ENCODE measurements at regions of chr3 and their contacts with region 1.

Region 1: DNA sequence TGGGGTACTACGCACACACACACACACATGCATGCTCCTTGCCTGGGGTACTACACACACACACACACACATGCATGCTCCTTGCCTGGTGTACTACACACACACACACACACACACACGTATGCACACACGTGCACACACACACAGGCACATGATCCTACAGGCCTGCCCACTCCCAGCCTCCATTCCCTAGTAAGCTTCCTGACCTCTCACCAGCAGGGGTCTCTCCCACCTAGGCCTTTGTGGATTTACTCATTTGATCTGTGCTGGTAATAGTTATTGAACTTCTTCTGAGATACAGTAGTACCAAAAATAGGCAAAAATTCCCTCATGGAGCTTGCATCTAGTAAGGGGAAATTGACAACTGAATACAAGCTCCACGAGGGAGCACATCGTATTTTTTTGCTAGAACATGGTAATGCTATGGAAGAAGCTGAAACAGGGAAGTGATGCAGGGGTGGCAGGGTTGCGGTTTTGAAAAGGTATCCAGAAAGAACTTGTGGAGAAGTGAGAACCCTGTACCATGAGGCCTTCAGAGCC is 19.1 kb downstream of the TTC21A start:
- DNase-seq: no peak
- ATAC-seq: peak; percentile 67
- H3K4me3 ChIP-seq: no peak overlapping the region
- H3K27ac ChIP-seq: peak overlapping the region in 1 of 2 donors; percentile 8
- H3K4me1 ChIP-seq: no peaks in the 10 kb centered on the region
- H3K27me3 ChIP-seq: no peaks in the 10 kb centered on the region

Region 2: DNA sequence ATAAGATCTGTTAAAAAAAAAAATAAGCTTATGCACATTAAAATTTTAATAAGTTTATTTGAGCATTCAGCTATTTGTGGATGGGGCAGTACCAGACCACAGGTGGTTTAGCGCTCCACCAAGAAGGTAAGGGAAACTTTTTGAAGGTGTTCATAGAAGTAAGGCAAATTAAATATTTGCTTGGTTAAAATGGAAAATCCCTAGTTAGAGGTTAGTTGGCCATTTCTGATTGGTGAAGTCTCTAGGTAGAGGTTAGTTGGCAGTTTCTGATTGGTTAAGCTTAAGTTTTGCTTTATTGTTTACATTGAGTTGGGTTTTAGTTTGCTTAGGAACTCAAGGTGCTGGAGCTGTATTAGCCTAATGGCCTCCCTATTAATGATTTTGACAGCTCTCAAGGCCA is 105.6 kb before region 1 on chr3:
- intact Hi-C with region 1: no loop called
- DNase-seq: no peak
- ATAC-seq: no peak
- H3K4me3 ChIP-seq: no peak overlapping the region
- H3K27ac ChIP-seq: no peak overlapping the region
- H3K4me1 ChIP-seq: no peaks in the 10 kb centered on the region
- H3K27me3 ChIP-seq: no peaks in the 10 kb centered on the region

Region 3: GRCh38 chr3:39189959-39190269 is 63.3 kb after region 1 on chr3:
- intact Hi-C with region 1: loop called (anchors 5 to 10 kb)
- DNase-seq: no peak
- ATAC-seq: peak; percentile 72
- H3K4me3 ChIP-seq: no peak overlapping the region
- H3K27ac ChIP-seq: no peak overlapping the region
- H3K4me1 ChIP-seq: no peaks in the 10 kb centered on the region
- H3K27me3 ChIP-seq: no peaks in the 10 kb centered on the region